Adrenal gland (tissue), 19 donors: ENCODE measurements at regions of chr15 and their contacts with region 1.

Region 1: GRCh38 chr15:34367101-34368081 is at the start of gene LPCAT4:
- DNase-seq: peak; percentile 83 to 93 (median 88)
- H3K4me3 ChIP-seq: peak within 1 kb of the TSS; percentile 72 to 94 (median 82)
- H3K27ac ChIP-seq: peak within 1 kb of the TSS; percentile 73 to 95 (median 92)
- H3K4me1 ChIP-seq: peaks cover 0 to 5% of the 10 kb centered on the region in 2 donors
- H3K27me3 ChIP-seq: no peaks in the 10 kb centered on the region
- CTCF ChIP-seq: peak; percentile 85 to 97 (median 94)
- POLR2A ChIP-seq: peak; percentile 47 to 62
- total RNA-seq, gene LPCAT4: 1.2 to 21.1 (median 11.4) TPM

Region 2: DNA sequence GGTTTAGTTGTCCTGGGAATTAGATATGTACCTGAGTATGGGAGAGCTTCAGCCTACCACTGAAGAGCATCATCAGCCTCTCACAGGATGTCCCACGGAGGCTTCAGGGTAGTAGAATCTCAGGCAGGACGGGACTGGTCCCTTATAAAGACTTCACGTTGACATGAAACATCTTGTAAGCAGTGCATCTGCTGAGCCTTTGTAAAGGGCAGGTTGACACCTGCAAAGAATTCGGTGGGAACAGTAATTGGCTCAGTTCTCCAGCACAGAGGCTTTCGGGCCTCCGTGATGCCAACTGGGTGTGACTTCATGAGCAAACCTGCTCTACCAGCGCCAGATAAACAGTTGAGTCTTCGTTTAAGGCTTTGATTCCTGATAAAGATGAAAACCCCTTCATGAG is 301.4 kb before region 1 on chr15:
- intact Hi-C with region 1: loop called in 1 of 2 experiments (anchors 10 kb)
- DNase-seq: no peak
- H3K4me3 ChIP-seq: no peak overlapping the region
- H3K27ac ChIP-seq: no peak overlapping the region
- H3K4me1 ChIP-seq: no peaks in the 10 kb centered on the region
- H3K27me3 ChIP-seq: no peaks in the 10 kb centered on the region
- CTCF ChIP-seq: no peak
- POLR2A ChIP-seq: no peak

Region 3: GRCh38 chr15:34241372-34242330 is 125.7 kb before region 1 on chr15:
- intact Hi-C with region 1: loop called (anchors 10 kb)
- DNase-seq: peak in 2 of 7 donors; percentile 33 to 41
- H3K4me3 ChIP-seq: no peak overlapping the region
- H3K27ac ChIP-seq: no peak overlapping the region
- H3K4me1 ChIP-seq: no peaks in the 10 kb centered on the region
- H3K27me3 ChIP-seq: no peaks in the 10 kb centered on the region
- CTCF ChIP-seq: peak; percentile 64 to 82 (median 70)
- POLR2A ChIP-seq: no peak